Activated CD4-positive, alpha-beta memory T cell treated with anti-CD3 and anti-CD28 coated beads for 36 hours (primary cell): ENCODE measurements at regions of chr2 and their contacts with region 1.

Region 1: DNA sequence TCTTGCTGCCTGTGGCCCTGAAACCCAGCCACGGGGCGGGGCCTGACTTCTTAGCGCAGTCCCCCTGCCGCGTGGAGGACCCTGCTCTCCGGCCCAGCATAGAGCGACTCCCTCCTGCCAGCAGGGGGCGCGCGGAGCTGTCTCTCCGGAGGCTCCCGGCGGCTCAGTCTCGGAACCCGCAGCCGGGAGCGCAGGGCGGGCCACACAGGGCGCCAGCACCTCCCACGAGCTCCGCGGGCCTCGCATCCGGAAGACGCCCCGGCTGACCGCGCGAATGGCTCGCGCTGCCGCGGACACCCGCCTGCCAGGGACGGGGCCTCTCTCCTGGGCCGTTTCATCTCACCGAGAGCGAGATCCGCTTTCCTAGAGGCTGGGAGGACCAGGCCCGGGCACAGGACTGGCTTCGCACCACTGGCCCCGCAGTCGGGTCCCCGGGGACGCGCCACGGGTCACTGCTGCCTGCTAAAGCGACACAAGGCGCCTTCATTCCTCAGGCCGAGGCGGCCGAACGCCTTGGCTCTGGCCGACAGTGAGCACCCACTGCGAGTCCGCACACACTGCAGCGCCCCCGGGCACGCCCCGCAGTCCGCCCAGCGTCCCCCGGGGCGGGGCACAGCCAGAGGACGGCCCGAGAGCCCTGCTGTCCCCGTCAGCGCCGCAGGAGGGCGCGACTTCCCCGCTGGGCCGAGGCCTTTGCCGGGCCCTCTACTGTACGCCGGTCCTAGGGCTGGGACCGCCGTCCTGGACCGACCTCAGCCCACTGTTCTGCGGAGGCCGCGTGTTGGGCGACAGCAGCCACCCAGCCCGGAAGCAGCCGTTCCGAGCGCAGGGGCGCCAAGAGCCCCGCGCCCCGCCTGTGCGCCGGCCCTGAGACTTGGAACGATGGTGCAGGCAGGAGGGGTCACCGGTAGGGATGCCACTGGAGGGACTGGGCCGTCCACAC is 39.0 kb upstream of the ARHGEF4 start:
- DNase-seq: peak; percentile 93
- H3K4me3 Mint-ChIP-seq: peak overlapping the region; percentile 65
- H3K27ac Mint-ChIP-seq: no peak overlapping the region
- H3K4me1 Mint-ChIP-seq: peaks cover 3% of the 10 kb centered on the region
- H3K27me3 Mint-ChIP-seq: no peaks in the 10 kb centered on the region

Region 2: DNA sequence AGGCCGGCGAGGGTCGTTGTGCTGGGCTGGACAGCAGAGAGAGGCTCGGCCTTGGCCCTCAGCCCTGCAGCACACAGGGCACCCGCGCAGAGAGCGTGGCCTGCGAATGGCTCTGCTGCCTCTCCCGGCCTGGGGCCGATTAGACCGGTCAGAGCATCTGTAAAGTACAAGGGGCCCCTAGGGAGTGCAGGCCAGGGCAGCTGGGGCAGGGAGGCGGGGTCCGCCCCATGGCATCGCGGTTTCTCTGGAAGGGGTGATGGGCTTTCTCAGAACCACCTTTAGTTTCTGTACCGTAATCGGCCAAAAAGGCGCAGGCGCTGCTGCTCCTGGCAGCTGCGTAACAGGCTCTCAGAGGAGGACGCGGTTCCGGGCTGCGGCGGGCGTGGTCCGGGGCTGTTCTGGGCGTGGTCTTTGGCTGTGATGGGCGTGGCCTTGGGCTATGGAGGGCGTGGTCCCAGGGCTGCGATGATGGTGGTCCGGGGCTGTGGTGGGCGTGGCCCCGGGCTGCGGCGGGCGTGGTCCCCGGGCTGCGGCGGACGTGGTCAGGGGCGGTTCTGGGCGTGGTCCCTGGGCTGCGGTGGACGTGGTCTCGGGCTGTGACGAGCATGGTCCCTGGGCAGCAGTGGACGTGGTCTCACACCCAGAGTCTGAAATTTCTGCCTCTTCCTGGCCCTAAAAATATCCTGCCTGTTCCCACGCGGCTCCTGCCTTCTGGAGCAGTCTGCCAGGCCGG is 70.3 kb before region 1 on chr2:
- CTCF ChIA-PET with region 1: interaction called, 14 read pairs
- POLR2A ChIA-PET with region 1: interaction called, 3 read pairs
- intact Hi-C with region 1: loop called (anchors 5 kb)
- DNase-seq: peak; percentile 95
- H3K4me3 Mint-ChIP-seq: peak overlapping the region; percentile 70
- H3K27ac Mint-ChIP-seq: peak overlapping the region; percentile 55
- H3K4me1 Mint-ChIP-seq: peaks cover 9% of the 10 kb centered on the region
- H3K27me3 Mint-ChIP-seq: peaks cover 1% of the 10 kb centered on the region

Region 3: DNA sequence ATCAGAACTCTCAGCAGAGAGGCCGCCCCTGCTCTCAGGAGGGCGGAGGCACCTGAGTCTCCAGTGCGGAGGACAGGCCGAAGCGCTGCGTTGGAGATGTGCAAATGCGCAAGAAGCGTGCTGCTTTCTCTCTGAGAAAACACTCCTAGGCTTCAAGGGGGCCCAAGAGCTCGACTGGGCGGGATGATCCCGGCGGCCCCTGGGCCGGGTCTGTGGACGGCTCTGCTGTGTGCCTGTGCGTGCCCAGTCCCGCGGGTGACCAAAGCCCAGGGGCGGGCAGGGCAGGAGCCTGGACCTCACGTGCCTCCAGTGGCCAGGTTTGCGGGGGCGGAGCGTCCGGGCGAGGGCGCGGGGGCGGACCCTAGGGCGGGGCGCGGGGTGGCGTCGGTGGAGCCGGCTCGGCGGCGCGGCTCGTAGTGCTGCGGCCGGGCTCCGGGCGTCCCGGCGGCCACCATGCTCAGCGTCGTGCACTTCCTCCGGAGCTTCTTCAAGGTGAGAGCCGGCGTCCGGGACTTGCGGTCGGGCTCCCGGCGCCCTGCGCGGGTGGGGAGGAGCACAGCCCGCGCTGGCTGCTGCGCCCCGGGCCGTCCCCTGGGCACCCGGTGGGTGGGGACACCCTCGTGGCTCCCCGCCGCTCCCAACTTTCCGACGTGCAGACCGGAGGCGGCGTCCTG is 38.9 kb after region 1 on chr2 and contains the start of gene ARHGEF4:
- CTCF ChIA-PET with region 1: interaction called, 17 read pairs
- POLR2A ChIA-PET with region 1: no interaction called
- intact Hi-C with region 1: loop called (anchors 2 kb)
- DNase-seq: peak; percentile 42
- H3K4me3 Mint-ChIP-seq: peak within 1 kb of the TSS; percentile 41
- H3K27ac Mint-ChIP-seq: no peak within 1 kb of the TSS
- H3K4me1 Mint-ChIP-seq: no peaks in the 10 kb centered on the region
- H3K27me3 Mint-ChIP-seq: peaks cover 40% of the 10 kb centered on the region
- total RNA-seq, gene ARHGEF4: 0.52 to 0.58 TPM

Region 4: GRCh38 chr2:130884503-130884902 is 86.7 kb after region 1 on chr2:
- CTCF ChIA-PET with region 1: interaction called, 27 read pairs
- POLR2A ChIA-PET with region 1: no interaction called
- intact Hi-C with region 1: no loop called
- DNase-seq: no peak
- H3K4me3 Mint-ChIP-seq: no peak overlapping the region
- H3K27ac Mint-ChIP-seq: no peak overlapping the region
- H3K4me1 Mint-ChIP-seq: no peaks in the 10 kb centered on the region
- H3K27me3 Mint-ChIP-seq: no peaks in the 10 kb centered on the region

Region 5: DNA sequence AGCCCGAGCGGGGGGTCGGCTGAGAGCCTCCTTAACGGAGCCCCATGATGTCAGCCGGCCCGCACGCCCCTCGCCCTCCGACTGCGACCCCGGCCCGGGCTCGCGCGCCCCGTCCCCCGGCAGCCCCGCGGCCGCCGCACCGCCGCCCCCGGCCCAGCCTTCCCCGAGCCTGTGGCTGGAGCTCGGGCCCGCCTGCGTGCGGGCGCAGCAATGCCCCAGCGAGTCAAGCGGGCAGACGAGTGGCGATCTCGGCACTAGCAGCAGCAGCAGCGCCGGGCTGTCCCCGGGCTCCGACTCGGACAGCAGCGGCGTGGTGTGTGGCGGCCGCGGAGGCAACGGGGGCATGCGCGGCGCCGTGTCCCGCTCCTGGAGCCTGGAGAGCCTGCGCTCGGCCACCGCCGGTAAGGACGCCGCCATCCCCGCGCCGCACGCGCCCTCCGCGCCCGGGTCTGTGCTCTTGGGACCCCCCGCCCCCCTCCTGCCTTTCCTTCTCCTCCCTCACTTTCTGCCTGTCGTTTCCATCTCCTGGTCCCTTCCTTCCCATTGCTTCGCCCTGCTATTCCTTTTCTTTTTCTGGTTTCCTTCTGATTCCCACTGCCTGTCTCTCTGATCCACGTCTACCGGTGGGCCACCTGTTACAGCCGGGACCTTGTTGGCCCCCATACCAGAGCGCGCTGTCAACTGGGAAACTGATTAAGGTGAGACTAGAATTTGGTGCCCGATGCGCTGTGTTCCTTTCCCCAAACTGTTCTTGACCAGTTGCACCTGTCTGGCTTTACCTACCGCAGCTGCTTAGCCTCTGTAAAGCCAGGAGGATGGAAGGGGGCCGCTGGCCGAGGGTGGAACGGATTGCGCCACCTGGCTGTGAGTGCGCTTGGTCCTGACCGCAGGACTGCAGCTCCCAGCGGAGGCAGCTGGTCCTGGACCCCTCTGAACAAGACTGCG is 166.4 kb after region 1 on chr2:
- CTCF ChIA-PET with region 1: interaction called, 6 read pairs
- POLR2A ChIA-PET with region 1: no interaction called
- intact Hi-C with region 1: loop called (anchors 1 kb)
- DNase-seq: peak; percentile 28
- H3K4me3 Mint-ChIP-seq: no peak overlapping the region
- H3K27ac Mint-ChIP-seq: no peak overlapping the region
- H3K4me1 Mint-ChIP-seq: peaks cover 6% of the 10 kb centered on the region
- H3K27me3 Mint-ChIP-seq: peaks cover 42% of the 10 kb centered on the region

Region 6: DNA sequence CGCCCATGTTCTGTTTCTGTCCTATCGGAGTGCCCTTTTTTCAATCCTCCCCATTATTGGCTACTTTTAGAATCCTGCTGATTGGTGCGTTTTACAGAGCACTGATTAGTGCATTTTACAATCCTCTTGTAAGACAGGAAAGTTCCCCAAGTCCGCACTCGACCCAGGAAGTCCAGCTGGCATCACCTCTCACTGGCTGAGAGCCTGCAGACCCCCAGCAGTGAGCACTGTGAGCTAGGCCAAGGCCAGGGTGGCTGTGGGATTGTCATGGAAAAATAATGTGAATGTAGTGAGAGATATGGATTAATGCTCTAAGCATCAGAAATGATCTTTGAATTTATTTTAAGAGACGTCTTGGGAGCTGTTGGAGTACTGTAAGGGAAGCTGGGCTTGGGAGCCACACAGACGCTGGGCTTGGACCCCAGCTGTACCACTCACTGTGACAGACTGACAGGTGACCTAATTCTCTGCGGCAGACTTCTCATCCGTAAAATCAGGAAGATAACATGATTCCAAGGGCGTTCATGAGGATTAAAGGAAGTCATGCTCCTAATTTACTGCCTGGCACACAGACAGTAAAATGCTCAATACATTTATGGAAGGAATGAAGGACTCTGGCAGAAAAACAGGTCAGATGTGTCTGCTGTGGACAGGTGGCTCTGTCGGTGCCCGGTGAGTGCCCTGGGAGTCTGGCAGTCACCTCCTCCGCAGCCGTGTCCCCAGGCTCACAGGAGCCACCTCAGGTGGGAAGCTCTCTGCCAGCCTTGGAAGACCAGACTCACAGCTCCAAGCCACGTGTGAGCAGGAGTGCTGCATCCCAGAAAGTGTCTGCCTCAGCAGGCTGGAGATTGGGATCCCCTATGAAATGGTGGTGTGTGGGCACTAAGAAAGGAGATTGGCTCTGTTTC is 190.0 kb after region 1 on chr2:
- CTCF ChIA-PET with region 1: no interaction called
- POLR2A ChIA-PET with region 1: no interaction called
- intact Hi-C with region 1: no loop called
- DNase-seq: no peak
- H3K4me3 Mint-ChIP-seq: no peak overlapping the region
- H3K27ac Mint-ChIP-seq: no peak overlapping the region
- H3K4me1 Mint-ChIP-seq: no peaks in the 10 kb centered on the region
- H3K27me3 Mint-ChIP-seq: no peaks in the 10 kb centered on the region